Transverse colon (tissue), 4 donors: ENCODE measurements at regions of chr4 and their contacts with region 1.

Region 1: GRCh38 chr4:178953447-178954120 is 1511.3 kb upstream of the AGA start:
- DNase-seq: no peak
- H3K4me3 ChIP-seq: no peak overlapping the region
- H3K27ac ChIP-seq: no peak overlapping the region
- H3K4me1 ChIP-seq: no peaks in the 10 kb centered on the region
- H3K27me3 ChIP-seq: no peaks in the 10 kb centered on the region
- CTCF ChIP-seq: no peak
- EP300 ChIP-seq: no peak
- POLR2A ChIP-seq: no peak

Region 2: GRCh38 chr4:178993306-178993705 is 39.7 kb after region 1 on chr4:
- in situ Hi-C with region 1: no loop called
- intact Hi-C with region 1: no loop called
- DNase-seq: no peak
- H3K4me3 ChIP-seq: no peak overlapping the region
- H3K27ac ChIP-seq: no peak overlapping the region
- H3K4me1 ChIP-seq: no peaks in the 10 kb centered on the region
- H3K27me3 ChIP-seq: no peaks in the 10 kb centered on the region
- CTCF ChIP-seq: no peak
- EP300 ChIP-seq: no peak
- POLR2A ChIP-seq: no peak

Region 3: DNA sequence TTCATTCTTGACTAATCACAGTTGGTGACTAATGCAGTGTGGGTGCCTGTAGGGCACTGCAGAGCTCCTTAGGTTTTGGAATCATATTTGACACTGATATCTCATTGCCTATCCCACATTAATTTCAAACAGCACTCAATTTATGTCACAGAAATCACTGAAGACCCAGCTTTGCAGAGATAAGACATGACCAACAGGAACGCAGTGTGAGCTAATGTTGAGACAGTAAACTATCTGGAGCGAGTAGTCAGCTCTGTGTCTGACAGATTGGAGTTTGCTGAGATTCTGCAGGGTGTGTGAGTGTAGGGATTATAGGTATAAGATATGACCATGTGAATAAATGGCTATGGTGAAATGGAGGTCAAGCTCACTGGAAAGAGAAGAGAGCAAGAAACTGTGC is 74.7 kb after region 1 on chr4:
- in situ Hi-C with region 1: no loop called
- intact Hi-C with region 1: loop called (anchors 2 kb)
- DNase-seq: no peak
- H3K4me3 ChIP-seq: no peak overlapping the region
- H3K27ac ChIP-seq: no peak overlapping the region
- H3K4me1 ChIP-seq: no peaks in the 10 kb centered on the region
- H3K27me3 ChIP-seq: no peaks in the 10 kb centered on the region
- CTCF ChIP-seq: no peak
- EP300 ChIP-seq: no peak
- POLR2A ChIP-seq: no peak